B cell (primary cell): ENCODE measurements at regions of chr17 and their contacts with region 1.

Region 1: DNA sequence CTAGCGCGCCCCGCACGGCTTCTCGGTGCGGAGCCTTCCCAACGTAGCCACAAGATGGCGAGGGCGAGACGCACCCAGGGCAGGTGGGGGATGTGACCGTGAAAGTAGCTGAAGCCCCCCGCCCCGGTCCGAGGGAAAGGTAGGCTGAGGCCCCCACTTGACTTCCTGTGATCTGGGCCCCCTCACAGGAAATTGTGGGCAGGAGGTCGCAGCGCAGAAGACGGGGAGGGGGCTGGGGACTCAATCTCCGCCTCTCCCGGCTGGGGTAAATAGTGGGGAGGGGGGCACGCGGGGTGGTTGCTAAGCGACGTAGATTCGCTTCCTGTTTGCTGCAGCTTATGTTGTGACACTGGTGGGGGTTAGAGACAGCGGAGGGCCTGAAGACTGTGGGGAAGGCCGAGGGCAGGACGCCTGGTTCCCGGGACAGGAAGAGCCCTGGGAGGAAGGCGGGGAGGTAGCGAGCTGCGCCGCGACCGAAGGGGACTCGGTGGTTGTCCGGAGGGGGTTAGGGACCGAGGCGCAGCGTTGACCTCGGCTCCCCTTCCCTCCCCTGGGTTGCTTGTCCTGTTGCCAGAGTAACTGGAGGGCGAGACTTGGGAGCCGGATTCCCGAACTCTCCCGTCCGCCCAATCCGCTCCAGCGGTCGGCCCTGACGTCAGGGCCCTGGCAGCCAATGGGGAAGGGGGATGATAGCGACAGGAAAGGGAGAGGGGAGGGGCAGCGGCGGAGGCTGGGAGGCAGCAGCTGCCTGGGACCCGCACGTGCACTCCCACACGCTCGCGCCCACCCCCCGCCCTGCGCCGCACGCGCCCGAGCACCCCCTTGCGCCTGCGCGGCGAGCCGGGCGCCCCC is 1.2 kb downstream of the KDM6B start:
- DNase-seq: peak; percentile 96
- ATAC-seq: peak; percentile 44
- H3K4me3 ChIP-seq: peak overlapping the region; percentile 42 to 99 (median 95)
- H3K4me3 Mint-ChIP-seq: peak overlapping the region; percentile 99
- H3K27ac ChIP-seq: peak overlapping the region; percentile 93 to 100
- H3K27ac Mint-ChIP-seq: peak overlapping the region; percentile 97
- H3K4me1 ChIP-seq: peaks cover 38 to 56% of the 10 kb centered on the region in 2 donors
- H3K4me1 Mint-ChIP-seq: peaks cover 46% of the 10 kb centered on the region
- H3K27me3 ChIP-seq: peaks cover 0 to 13% (median under 1%) of the 10 kb centered on the region in 4 experiments
- H3K27me3 Mint-ChIP-seq: peaks cover 15% of the 10 kb centered on the region
- CTCF ChIP-seq: peak; percentile 86

Region 2: GRCh38 chr17:6651357-6651918 is 1183.8 kb before region 1 on chr17 and contains the starts of genes C17orf100 and MED31:
- CTCF ChIA-PET with region 1: no interaction called
- POLR2A ChIA-PET with region 1: no interaction called
- intact Hi-C with region 1: loop called (anchors 10 kb)
- DNase-seq: peak; percentile 95
- ATAC-seq: peak; percentile 91
- H3K4me3 ChIP-seq: peak within 1 kb of the TSS; percentile 63 to 96 (median 74)
- H3K4me3 Mint-ChIP-seq: peak within 1 kb of the TSS; percentile 99
- H3K27ac ChIP-seq: peak within 1 kb of the TSS; percentile 96 to 99
- H3K27ac Mint-ChIP-seq: peak within 1 kb of the TSS; percentile 99
- H3K4me1 ChIP-seq: peaks cover 28 to 45% of the 10 kb centered on the region in 2 donors
- H3K4me1 Mint-ChIP-seq: peaks cover 69% of the 10 kb centered on the region
- H3K27me3 ChIP-seq: no peaks in the 10 kb centered on the region
- H3K27me3 Mint-ChIP-seq: no peaks in the 10 kb centered on the region
- CTCF ChIP-seq: no peak
- total RNA-seq, gene C17orf100: 7.7 and 11.6 TPM in 2 replicates
- total RNA-seq, gene MED31: 24.7 and 25.5 TPM in 2 replicates

Region 3: DNA sequence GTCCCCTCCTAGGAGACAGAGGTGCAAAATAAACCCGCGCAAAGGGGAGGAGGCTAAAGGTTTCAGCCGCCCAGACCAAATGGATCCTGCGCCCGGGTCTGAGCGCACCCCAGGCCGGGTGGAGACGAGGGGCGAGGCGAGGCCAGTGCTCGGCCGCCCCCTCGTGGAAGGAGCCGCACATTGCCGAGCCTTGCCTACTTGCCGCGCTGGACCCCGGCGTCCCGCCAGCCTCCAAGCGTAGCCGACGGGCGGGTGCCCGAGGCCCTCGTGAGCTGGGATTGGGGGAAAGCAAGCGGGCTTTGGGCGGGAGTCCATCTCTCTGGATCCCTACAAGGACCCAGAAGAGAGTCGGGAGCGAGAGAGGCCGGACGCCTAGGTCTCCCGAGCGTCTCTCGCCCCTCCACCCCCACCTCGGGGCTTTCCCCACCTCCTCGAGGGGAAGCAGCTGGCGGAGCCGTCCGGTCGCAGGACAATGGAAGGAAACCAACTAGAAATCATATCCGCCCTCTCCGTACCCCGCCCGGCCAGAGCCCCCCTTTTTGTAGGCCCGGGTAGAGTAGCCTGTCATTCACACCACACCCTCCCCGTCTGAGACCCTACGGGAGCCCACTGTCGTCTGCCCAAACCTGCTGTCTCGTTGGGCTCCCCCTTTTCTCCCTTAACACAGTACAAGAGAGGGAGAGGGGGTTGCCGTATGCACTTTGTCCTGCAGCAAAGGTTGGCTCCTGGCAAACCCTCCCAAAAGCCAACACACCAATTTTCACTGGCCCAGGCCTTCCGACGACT is 813.0 kb before region 1 on chr17:
- CTCF ChIA-PET with region 1: no interaction called
- POLR2A ChIA-PET with region 1: interaction called, 10 read pairs
- intact Hi-C with region 1: loop called (anchors 10 kb)
- DNase-seq: peak; percentile 92
- ATAC-seq: peak; percentile 82
- H3K4me3 ChIP-seq: peak overlapping the region in 4 of 5 experiments; percentile 44 to 71 (median 62)
- H3K4me3 Mint-ChIP-seq: peak overlapping the region; percentile 82
- H3K27ac ChIP-seq: peak overlapping the region; percentile 73 to 80
- H3K27ac Mint-ChIP-seq: peak overlapping the region; percentile 92
- H3K4me1 ChIP-seq: peaks cover 21 to 27% of the 10 kb centered on the region in 2 donors
- H3K4me1 Mint-ChIP-seq: peaks cover 28% of the 10 kb centered on the region
- H3K27me3 ChIP-seq: no peaks in the 10 kb centered on the region
- H3K27me3 Mint-ChIP-seq: no peaks in the 10 kb centered on the region
- CTCF ChIP-seq: peak; percentile 98

Region 4: GRCh38 chr17:7851438-7852256 is 16.5 kb after region 1 on chr17:
- CTCF ChIA-PET with region 1: interaction called, 53 read pairs
- POLR2A ChIA-PET with region 1: interaction called, 21 read pairs
- intact Hi-C with region 1: loop called (anchors 1 kb)
- DNase-seq: peak; percentile 98
- ATAC-seq: peak; percentile 95
- H3K4me3 ChIP-seq: peak overlapping the region in 4 of 5 experiments; percentile 28 to 50 (median 38)
- H3K4me3 Mint-ChIP-seq: peak overlapping the region; percentile 71
- H3K27ac ChIP-seq: peak overlapping the region; percentile 55 to 56
- H3K27ac Mint-ChIP-seq: peak overlapping the region; percentile 82
- H3K4me1 ChIP-seq: peaks cover 20 to 33% of the 10 kb centered on the region in 2 donors
- H3K4me1 Mint-ChIP-seq: peaks cover 24% of the 10 kb centered on the region
- H3K27me3 ChIP-seq: no peaks in the 10 kb centered on the region
- H3K27me3 Mint-ChIP-seq: no peaks in the 10 kb centered on the region
- CTCF ChIP-seq: peak; percentile 93

Region 5: GRCh38 chr17:7887482-7888183 is 52.4 kb after region 1 on chr17:
- CTCF ChIA-PET with region 1: interaction called, 5 read pairs
- POLR2A ChIA-PET with region 1: interaction called, 7 read pairs
- intact Hi-C with region 1: loop called (anchors 1 kb)
- DNase-seq: peak; percentile 86
- ATAC-seq: peak; percentile 75
- H3K4me3 ChIP-seq: peak overlapping the region; percentile 65 to 95 (median 79)
- H3K4me3 Mint-ChIP-seq: no peak overlapping the region
- H3K27ac ChIP-seq: peak overlapping the region; percentile 46 to 68
- H3K27ac Mint-ChIP-seq: no peak overlapping the region
- H3K4me1 ChIP-seq: peaks cover 19 to 36% of the 10 kb centered on the region in 2 donors
- H3K4me1 Mint-ChIP-seq: peaks cover 3% of the 10 kb centered on the region
- H3K27me3 ChIP-seq: no peaks in the 10 kb centered on the region
- H3K27me3 Mint-ChIP-seq: no peaks in the 10 kb centered on the region
- CTCF ChIP-seq: no peak